CD8-positive, alpha-beta memory T cell (primary cell): ENCODE measurements at regions of chr16 and their contacts with region 1.

Region 1: DNA sequence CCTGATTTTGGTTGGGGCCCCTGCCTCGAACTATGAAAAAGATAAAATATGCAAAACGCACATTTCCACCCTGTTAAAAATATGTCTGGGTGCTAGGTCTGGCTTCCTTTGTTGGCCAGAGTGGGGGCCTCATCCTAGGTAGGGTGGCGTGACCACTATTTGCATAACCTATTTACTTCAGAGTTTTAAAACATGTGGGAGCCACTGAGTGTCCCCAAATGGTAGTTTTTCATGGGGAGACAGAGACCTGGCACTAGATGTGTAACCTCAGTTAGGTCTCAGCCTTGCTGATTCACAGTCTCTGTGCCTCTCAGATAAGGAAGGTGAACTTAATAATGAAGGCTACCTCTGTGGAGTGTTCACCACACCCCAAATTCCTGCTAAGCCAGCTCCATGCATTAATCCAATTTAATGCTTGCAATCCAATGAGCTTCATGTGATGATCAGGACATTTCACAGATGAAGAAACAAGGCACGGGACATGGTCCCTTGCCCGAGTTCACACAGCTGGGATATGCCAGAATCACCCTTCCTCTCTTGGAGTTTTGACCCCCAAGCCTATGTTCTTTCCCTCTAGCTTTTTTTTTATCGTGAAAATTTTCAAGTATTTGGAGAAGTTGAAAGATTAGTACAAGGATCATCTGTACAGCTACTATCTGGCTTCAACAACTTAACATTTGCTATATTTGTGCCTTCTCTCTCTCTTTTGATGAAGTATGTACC is 103.4 kb downstream of the IRF8 start:
- DNase-seq: no peak
- H3K4me3 ChIP-seq: no peak overlapping the region
- H3K4me3 Mint-ChIP-seq: no peak overlapping the region
- H3K27ac ChIP-seq: no peak overlapping the region
- H3K27ac Mint-ChIP-seq: no peak overlapping the region
- H3K4me1 ChIP-seq: no peaks in the 10 kb centered on the region
- H3K4me1 Mint-ChIP-seq: peaks cover 7 to 23% (median 14%) of the 10 kb centered on the region in 3 donors
- H3K27me3 ChIP-seq: no peaks in the 10 kb centered on the region
- H3K27me3 Mint-ChIP-seq: no peaks in the 10 kb centered on the region

Region 2: GRCh38 chr16:85986931-85987749 is 15.2 kb before region 1 on chr16:
- CTCF ChIA-PET with region 1: interaction called, 10 read pairs
- POLR2A ChIA-PET with region 1: no interaction called
- DNase-seq: peak in 4 of 5 donors; percentile 16 to 47 (median 18)
- H3K4me3 ChIP-seq: no peak overlapping the region
- H3K4me3 Mint-ChIP-seq: peak overlapping the region in 4 of 7 donors; percentile 21 to 79 (median 61)
- H3K27ac ChIP-seq: no peak overlapping the region
- H3K27ac Mint-ChIP-seq: peak overlapping the region in 2 of 8 donors; percentile 64 to 82
- H3K4me1 ChIP-seq: peaks cover 6% of the 10 kb centered on the region
- H3K4me1 Mint-ChIP-seq: peaks cover 24 to 47% (median 43%) of the 10 kb centered on the region in 3 donors
- H3K27me3 ChIP-seq: peaks cover 4% of the 10 kb centered on the region
- H3K27me3 Mint-ChIP-seq: peaks cover 8 to 18% of the 10 kb centered on the region in 2 donors

Region 3: DNA sequence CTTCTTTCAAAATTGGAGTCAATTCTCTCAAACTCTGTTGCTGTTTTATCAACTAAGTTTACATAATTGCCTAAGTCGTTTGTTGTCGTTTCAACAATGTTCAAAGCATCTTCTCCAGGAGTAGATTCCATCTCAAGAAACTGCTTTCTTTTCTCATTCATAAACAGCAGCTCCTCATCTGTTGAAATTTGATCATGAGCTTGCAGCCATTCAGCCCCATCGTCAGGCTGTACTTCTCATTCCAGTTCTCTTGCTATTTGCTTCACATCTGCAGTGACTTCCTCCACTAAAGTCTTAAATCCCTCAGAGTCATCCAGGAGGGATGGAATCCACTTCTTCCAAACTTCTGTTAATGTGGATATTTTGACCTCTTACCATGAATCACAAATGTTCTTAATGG is 127.2 kb after region 1 on chr16:
- CTCF ChIA-PET with region 1: no interaction called
- POLR2A ChIA-PET with region 1: no interaction called
- DNase-seq: no peak
- H3K4me3 ChIP-seq: no peak overlapping the region
- H3K4me3 Mint-ChIP-seq: no peak overlapping the region
- H3K27ac ChIP-seq: no peak overlapping the region
- H3K27ac Mint-ChIP-seq: no peak overlapping the region
- H3K4me1 ChIP-seq: no peaks in the 10 kb centered on the region
- H3K4me1 Mint-ChIP-seq: no peaks in the 10 kb centered on the region
- H3K27me3 ChIP-seq: no peaks in the 10 kb centered on the region
- H3K27me3 Mint-ChIP-seq: peaks cover 3 to 18% of the 10 kb centered on the region in 2 donors